SK-N-SH (cell line): ENCODE measurements at regions of chr9 and their contacts with region 1.

Region 1: GRCh38 chr9:125374443-125375309 is 113.0 kb downstream of the GAPVD1 start:
- DNase-seq: peak; percentile 89
- H3K4me3 ChIP-seq: peak overlapping the region; percentile 36 to 58
- H3K27ac ChIP-seq: no peak overlapping the region
- H3K4me1 ChIP-seq: peaks cover 0 to 31% of the 10 kb centered on the region in 2 experiments; a peak in 1 of 4 replicates
- H3K27me3 ChIP-seq: no peaks in the 10 kb centered on the region
- CTCF ChIP-seq: peak; percentile 76
- EP300 ChIP-seq: no peak
- RAD21 ChIP-seq: peak; percentile 96

Region 2: DNA sequence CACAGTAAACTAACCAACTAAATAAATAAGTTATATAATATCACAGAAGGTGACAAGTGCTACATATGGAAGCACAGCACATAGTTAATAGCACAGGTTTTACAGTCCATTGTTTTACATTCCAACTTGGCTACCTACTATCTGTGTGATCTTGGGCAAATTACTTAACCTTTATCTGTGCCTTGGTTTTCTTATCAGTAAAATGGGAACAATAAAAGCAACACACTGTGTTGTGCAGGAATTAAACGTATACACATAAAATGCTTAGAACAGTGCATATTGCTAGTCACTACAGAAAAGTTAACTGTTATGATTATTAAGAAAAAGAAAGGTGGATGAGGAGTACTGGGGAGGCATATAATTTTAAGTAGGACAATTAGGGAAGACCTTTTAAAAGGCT is 391.0 kb before region 1 on chr9:
- CTCF ChIA-PET with region 1: no interaction called
- POLR2A ChIA-PET with region 1: no interaction called
- DNase-seq: no peak
- H3K4me3 ChIP-seq: no peak overlapping the region
- H3K27ac ChIP-seq: no peak overlapping the region
- H3K4me1 ChIP-seq: no peaks in the 10 kb centered on the region
- H3K27me3 ChIP-seq: no peaks in the 10 kb centered on the region
- CTCF ChIP-seq: no peak
- EP300 ChIP-seq: no peak
- RAD21 ChIP-seq: no peak

Region 3: GRCh38 chr9:125255781-125256391 is 118.8 kb before region 1 on chr9:
- CTCF ChIA-PET with region 1: interaction called, 11 read pairs
- POLR2A ChIA-PET with region 1: no interaction called
- DNase-seq: peak; percentile 67
- H3K4me3 ChIP-seq: no peak overlapping the region
- H3K27ac ChIP-seq: no peak overlapping the region
- H3K4me1 ChIP-seq: no peaks in the 10 kb centered on the region
- H3K27me3 ChIP-seq: no peaks in the 10 kb centered on the region
- CTCF ChIP-seq: peak; percentile 60
- EP300 ChIP-seq: no peak
- RAD21 ChIP-seq: peak; percentile 76

Region 4: GRCh38 chr9:125393426-125393825 is 18.8 kb after region 1 on chr9:
- CTCF ChIA-PET with region 1: no interaction called
- POLR2A ChIA-PET with region 1: no interaction called
- DNase-seq: no peak
- H3K4me3 ChIP-seq: no peak overlapping the region
- H3K27ac ChIP-seq: no peak overlapping the region
- H3K4me1 ChIP-seq: peaks cover 0 to 3% of the 10 kb centered on the region in 2 experiments; a peak in 1 of 4 replicates
- H3K27me3 ChIP-seq: no peaks in the 10 kb centered on the region
- CTCF ChIP-seq: no peak
- EP300 ChIP-seq: no peak
- RAD21 ChIP-seq: no peak

Region 5: GRCh38 chr9:125415583-125416460 is 41.1 kb after region 1 on chr9:
- CTCF ChIA-PET with region 1: no interaction called
- POLR2A ChIA-PET with region 1: no interaction called
- DNase-seq: no peak
- H3K4me3 ChIP-seq: no peak overlapping the region
- H3K27ac ChIP-seq: no peak overlapping the region
- H3K4me1 ChIP-seq: no peaks in the 10 kb centered on the region
- H3K27me3 ChIP-seq: no peaks in the 10 kb centered on the region
- CTCF ChIP-seq: no peak
- EP300 ChIP-seq: no peak
- RAD21 ChIP-seq: no peak

Region 6: GRCh38 chr9:125497906-125498305 is 123.2 kb after region 1 on chr9:
- CTCF ChIA-PET with region 1: no interaction called
- POLR2A ChIA-PET with region 1: no interaction called
- DNase-seq: no peak
- H3K4me3 ChIP-seq: no peak overlapping the region
- H3K27ac ChIP-seq: no peak overlapping the region
- H3K4me1 ChIP-seq: peaks cover 0 to 18% of the 10 kb centered on the region in 2 experiments; a peak in 2 of 4 replicates
- H3K27me3 ChIP-seq: no peaks in the 10 kb centered on the region
- CTCF ChIP-seq: no peak
- EP300 ChIP-seq: no peak
- RAD21 ChIP-seq: no peak